ENCODE measurements at regions of chr15 and their contacts with region 1.

Region 1: GRCh38 chr15:56943403-56943802 is 25.0 kb downstream of the TCF12 start:
- DNase-seq: no peak
- ATAC-seq: no peak
- H3K4me3 ChIP-seq: no peak overlapping the region
- H3K4me3 Mint-ChIP-seq: no peak overlapping the region
- H3K27ac ChIP-seq: no peak overlapping the region
- H3K27ac Mint-ChIP-seq: no peak overlapping the region
- H3K4me1 ChIP-seq: peaks cover 9% of the 10 kb centered on the region
- H3K4me1 Mint-ChIP-seq: peaks cover 55% of the 10 kb centered on the region
- H3K27me3 ChIP-seq: no peaks in the 10 kb centered on the region
- H3K27me3 Mint-ChIP-seq: no peaks in the 10 kb centered on the region
- CTCF ChIP-seq: no peak

Region 2: GRCh38 chr15:56886363-56886931 is 57.0 kb before region 1 on chr15:
- CTCF ChIA-PET with region 1: no interaction called
- POLR2A ChIA-PET with region 1: no interaction called
- intact Hi-C with region 1: no loop called
- DNase-seq: peak in 4 of 9 experiments; percentile 19 to 69 (median 39)
- ATAC-seq: peak; percentile 25
- H3K4me3 ChIP-seq: peak overlapping the region; percentile 77
- H3K4me3 Mint-ChIP-seq: peak overlapping the region; percentile 86
- H3K27ac ChIP-seq: peak overlapping the region; percentile 68 to 92
- H3K27ac Mint-ChIP-seq: peak overlapping the region; percentile 86
- H3K4me1 ChIP-seq: peaks cover 14% of the 10 kb centered on the region
- H3K4me1 Mint-ChIP-seq: peaks cover 31% of the 10 kb centered on the region
- H3K27me3 ChIP-seq: no peaks in the 10 kb centered on the region
- H3K27me3 Mint-ChIP-seq: no peaks in the 10 kb centered on the region
- CTCF ChIP-seq: no peak

Region 3: DNA sequence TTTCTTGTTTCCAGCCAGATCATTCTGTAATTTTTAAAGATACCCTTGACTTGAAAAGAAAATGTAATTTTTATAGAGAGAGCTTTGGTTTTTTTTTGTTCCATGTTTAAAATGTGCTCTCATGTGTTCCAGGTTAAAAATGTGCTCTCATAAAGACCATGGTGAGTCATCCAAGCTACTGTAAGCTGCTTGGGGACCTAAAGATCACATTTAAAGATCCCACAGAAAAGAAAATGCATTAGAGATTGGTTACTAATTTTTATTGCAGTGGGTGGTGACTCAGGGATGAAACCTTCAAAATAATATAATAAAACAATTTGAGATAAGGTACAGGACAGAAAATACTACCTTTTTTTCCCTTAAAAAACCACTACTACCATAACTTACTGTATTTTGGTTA is 14.0 kb before region 1 on chr15:
- CTCF ChIA-PET with region 1: interaction called, 5 read pairs
- POLR2A ChIA-PET with region 1: interaction called, 5 read pairs
- intact Hi-C with region 1: loop called in 1 of 2 experiments (anchors 2 kb)
- DNase-seq: no peak
- ATAC-seq: no peak
- H3K4me3 ChIP-seq: no peak overlapping the region
- H3K4me3 Mint-ChIP-seq: no peak overlapping the region
- H3K27ac ChIP-seq: no peak overlapping the region
- H3K27ac Mint-ChIP-seq: peak overlapping the region; percentile 16
- H3K4me1 ChIP-seq: peaks cover 23% of the 10 kb centered on the region
- H3K4me1 Mint-ChIP-seq: peaks cover 76% of the 10 kb centered on the region
- H3K27me3 ChIP-seq: no peaks in the 10 kb centered on the region
- H3K27me3 Mint-ChIP-seq: no peaks in the 10 kb centered on the region
- CTCF ChIP-seq: no peak